ENCODE measurements at regions of chr22 and their contacts with region 1.

Region 1: GRCh38 chr22:37676736-37677492 is 1.5 kb downstream of the LGALS1 start:
- DNase-seq: peak; percentile 88 to 93
- H3K4me3 ChIP-seq: peak overlapping the region; percentile 56
- H3K27ac ChIP-seq: peak overlapping the region; percentile 69
- H3K4me1 ChIP-seq: peaks cover 56% of the 10 kb centered on the region
- H3K27me3 ChIP-seq: no peaks in the 10 kb centered on the region
- CTCF ChIP-seq: no peak

Region 2: DNA sequence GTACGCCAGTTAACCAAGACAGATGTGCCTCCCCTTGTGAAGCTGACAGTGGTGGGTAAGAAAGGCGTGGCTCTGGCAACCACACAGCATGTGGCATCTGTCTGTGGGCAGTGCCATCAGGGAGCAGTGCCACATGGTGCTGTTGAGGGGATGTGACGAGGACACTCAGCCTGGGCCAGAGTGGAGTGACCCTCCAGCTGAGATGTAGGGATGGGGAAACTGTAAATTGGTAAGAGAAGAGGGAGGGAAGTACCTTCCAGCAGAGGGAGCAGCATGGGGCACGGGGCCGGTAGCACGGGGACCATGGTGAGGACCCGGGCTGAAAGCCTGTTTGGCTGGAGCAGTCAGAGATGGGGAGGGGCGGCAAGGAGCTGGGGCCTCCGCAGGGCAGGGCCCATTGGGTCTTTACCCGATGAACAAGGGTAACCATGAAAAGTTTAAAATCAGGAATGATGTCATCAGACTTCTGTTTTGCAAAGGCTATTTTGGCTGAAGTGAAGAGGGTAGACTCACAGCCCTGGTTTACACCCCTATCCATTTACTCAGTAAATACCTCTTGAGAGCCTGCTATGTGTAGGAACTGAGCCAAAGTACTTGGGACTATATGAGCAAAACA is 577.8 kb before region 1 on chr22:
- CTCF ChIA-PET with region 1: no interaction called
- POLR2A ChIA-PET with region 1: no interaction called
- intact Hi-C with region 1: no loop called
- DNase-seq: no peak
- H3K4me3 ChIP-seq: no peak overlapping the region
- H3K27ac ChIP-seq: no peak overlapping the region
- H3K4me1 ChIP-seq: no peaks in the 10 kb centered on the region
- H3K27me3 ChIP-seq: peaks cover 42% of the 10 kb centered on the region
- CTCF ChIP-seq: 0 out of 2 replicates have a peak, but pooled peaks have one; percentile 36

Region 3: DNA sequence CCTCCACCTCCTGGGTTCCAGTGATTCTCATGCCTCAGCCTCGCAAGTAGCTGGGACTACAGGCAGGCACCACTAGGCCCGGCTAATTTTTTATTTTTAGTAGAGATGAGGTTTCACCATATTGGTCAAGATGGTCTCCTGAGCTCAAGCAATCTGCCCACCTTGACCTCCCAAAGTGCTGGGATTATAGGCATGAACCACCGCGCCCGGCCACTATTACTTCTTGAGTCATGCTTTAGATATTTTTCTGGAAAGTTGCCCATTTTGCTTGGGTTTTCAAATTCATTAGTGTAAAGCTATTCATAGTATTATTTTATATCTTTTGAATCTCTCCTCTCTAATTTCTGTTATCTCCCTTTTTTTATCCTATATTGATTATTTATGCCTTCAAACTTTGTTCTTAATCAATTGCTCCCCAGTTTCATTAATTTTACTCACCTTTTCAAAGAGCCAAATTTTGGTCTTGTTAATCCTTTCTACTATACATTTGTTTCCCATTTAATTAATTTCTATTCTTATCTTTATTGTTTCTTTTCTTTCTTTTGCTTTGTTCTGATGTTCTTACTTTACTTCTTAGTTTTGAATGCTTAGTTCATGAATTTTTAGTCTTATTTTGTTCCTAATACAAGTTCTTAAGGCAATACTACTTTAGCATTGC is 422.6 kb before region 1 on chr22:
- CTCF ChIA-PET with region 1: no interaction called
- POLR2A ChIA-PET with region 1: interaction called, 25 read pairs
- intact Hi-C with region 1: no loop called
- DNase-seq: peak; percentile 57 to 76
- H3K4me3 ChIP-seq: peak overlapping the region; percentile 8; the same call in 1 of the 2 replicates
- H3K27ac ChIP-seq: peak overlapping the region; percentile 52
- H3K4me1 ChIP-seq: peaks cover 43% of the 10 kb centered on the region
- H3K27me3 ChIP-seq: no peaks in the 10 kb centered on the region
- CTCF ChIP-seq: no peak

Region 4: GRCh38 chr22:37643225-37643847 is 33.6 kb before region 1 on chr22:
- CTCF ChIA-PET with region 1: interaction called, 32 read pairs
- POLR2A ChIA-PET with region 1: interaction called, 3 read pairs
- intact Hi-C with region 1: loop called (anchors 1 kb)
- DNase-seq: peak; percentile 65 to 86
- H3K4me3 ChIP-seq: no peak overlapping the region
- H3K27ac ChIP-seq: no peak overlapping the region
- H3K4me1 ChIP-seq: peaks cover 31% of the 10 kb centered on the region
- H3K27me3 ChIP-seq: no peaks in the 10 kb centered on the region
- CTCF ChIP-seq: peak; percentile 99

Region 5: DNA sequence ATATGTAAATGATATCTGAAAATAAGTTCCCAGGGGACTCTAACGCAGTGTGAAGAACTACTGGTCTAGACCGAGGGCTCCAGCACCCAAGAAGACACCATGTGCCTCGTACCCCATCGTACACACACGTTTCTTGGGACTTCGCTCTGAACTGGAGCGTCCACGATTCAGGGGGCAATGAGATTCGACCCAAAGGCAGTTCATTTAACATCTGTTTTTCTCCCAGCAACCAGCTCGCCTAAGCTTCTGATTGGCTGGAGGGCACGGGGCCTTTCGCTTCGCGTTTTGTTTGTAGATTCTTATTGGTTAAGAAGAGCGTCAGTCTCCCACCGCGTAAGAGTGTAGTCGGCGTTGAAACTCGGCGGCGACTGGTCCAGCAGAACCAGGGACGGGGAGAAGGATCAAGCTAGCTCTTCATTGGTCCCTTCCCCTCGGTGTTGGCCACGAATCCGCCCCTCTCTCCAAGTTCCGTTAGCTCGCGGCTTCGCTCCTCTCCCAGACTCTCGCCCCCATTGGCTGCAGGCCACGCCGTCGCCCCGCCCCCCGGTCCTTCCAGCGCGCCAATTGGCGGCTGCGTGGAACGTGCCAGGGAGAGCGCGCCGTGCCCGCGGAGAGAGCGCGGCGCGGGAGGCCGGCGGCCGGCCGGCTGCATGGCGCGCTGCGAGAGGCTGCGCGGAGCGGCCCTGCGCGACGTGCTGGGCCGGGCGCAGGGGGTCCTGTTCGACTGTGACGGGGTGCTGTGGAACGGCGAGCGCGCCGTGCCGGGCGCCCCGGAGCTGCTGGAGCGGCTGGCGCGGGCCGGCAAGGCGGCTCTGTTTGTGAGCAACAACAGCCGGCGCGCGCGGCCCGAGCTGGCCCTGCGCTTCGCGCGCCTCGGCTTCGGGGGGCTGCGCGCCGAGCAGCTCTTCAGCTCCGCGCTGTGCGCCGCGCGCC is 18.5 kb before region 1 on chr22 and contains the start of gene PDXP:
- CTCF ChIA-PET with region 1: interaction called, 3 read pairs
- POLR2A ChIA-PET with region 1: interaction called, 5 read pairs
- intact Hi-C with region 1: loop called (anchors 2 kb)
- DNase-seq: peak; percentile 99
- H3K4me3 ChIP-seq: peak within 1 kb of the TSS; percentile 69
- H3K27ac ChIP-seq: no peak within 1 kb of the TSS
- H3K4me1 ChIP-seq: peaks cover 28% of the 10 kb centered on the region
- H3K27me3 ChIP-seq: no peaks in the 10 kb centered on the region
- CTCF ChIP-seq: no peak
- total RNA-seq, gene PDXP: 10.9 and 13.5 TPM in 2 replicates

Region 6: DNA sequence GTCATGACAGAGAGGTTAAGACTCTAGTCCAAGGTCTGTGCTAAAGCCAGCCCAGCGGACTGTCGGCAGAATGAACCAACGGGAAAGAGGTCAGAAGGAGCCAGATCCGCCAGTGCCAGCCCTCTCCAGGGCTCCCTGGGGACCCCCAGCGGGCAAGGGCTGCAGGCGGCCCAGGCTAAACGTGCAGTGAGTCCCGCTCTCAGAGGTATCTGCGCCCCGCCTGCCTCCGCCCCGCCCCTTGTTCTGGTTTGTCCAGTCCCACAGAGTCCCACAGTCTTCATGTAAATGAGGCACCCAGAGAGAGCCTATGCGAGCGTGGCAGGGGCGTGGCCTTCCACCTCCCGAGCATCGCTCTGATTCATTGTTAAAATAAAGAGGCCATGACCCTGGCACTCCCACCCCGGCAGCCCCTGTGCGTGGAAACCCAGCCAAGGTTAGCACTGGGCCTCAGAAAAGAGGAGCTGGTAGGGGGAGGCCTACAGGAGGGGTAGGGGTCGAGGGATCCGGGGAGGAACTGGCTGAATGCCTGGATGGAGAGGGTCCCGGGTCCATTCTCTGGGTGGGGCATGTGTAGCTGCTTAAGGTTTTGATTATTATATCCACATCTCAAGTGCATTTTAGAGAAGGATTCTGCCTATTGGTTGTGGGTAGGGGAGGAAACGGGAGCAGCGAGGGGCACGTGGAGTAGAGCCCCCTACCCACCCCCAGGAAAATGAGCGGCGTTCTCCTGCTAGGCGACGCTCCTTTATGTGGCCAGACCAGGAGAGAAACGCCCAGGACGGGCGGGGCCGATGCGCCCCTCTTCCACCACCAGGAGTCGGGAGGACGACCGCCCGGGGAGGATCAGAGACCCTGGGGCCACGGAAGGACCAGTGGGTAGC is 20.0 kb after region 1 on chr22 and contains the start of gene TRIOBP:
- CTCF ChIA-PET with region 1: no interaction called
- POLR2A ChIA-PET with region 1: no interaction called
- intact Hi-C with region 1: loop called (anchors 2 kb)
- DNase-seq: peak; percentile 97 to 98
- H3K4me3 ChIP-seq: no peak within 1 kb of the TSS; the same call in 1 of the 2 replicates
- H3K27ac ChIP-seq: 0 out of 2 replicates have a peak within 1 kb of the TSS, but pooled peaks have one; percentile 1
- H3K4me1 ChIP-seq: peaks cover 17% of the 10 kb centered on the region
- H3K27me3 ChIP-seq: no peaks in the 10 kb centered on the region
- CTCF ChIP-seq: peak; percentile 61; the same call in 1 of the 2 replicates
- total RNA-seq, gene TRIOBP: 170 and 172 TPM in 2 replicates

Region 7: DNA sequence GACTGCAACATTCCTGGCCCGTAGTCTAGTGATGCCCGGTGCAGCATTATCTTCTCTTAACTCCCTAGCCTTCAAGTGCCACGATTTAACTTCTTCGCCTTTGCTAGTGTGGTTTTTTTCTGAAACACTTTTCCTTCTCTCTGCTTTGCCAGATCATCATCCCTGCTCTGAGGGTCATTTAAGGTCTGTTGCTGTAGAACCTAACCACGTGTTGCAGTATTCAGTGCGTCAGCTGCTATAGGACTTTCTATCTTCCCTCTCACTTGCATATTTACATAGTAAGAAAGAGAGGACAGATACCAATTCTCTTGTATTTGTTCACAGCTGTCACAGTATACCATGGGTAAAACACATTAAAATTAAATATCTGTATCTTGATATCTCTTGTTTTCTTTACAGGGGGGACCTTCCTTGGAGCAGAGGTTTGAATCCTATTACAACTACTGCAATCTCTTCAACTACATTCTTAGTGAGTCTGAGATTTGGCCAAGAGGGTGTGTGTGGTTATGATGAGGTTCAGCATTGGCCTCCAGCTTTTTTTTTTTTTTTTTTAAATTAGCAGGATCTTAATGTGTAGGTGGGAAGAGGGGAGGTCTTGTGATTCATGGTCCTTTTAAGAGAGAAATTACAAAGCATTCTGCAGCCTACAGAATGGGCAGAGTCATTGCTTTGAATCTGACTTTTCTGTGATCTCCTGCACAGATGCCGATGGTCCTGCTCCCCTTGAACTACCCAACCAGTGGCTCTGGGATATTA is 185.8 kb after region 1 on chr22:
- CTCF ChIA-PET with region 1: interaction called, 14 read pairs
- POLR2A ChIA-PET with region 1: no interaction called
- intact Hi-C with region 1: no loop called
- DNase-seq: no peak
- H3K4me3 ChIP-seq: no peak overlapping the region
- H3K27ac ChIP-seq: no peak overlapping the region
- H3K4me1 ChIP-seq: no peaks in the 10 kb centered on the region
- H3K27me3 ChIP-seq: no peaks in the 10 kb centered on the region
- CTCF ChIP-seq: no peak